Astrocyte of the cerebellum (primary cell): ENCODE measurements at regions of chr10 and their contacts with region 1.

Region 1: GRCh38 chr10:119478111-119478802 is 64.3 kb downstream of the RGS10 start:
- DNase-seq: no peak
- H3K4me3 ChIP-seq: no peak overlapping the region
- CTCF ChIP-seq: no peak

Region 2: GRCh38 chr10:118950190-118950680 is 528.0 kb before region 1 on chr10:
- in situ Hi-C with region 1: no loop called
- DNase-seq: no peak
- H3K4me3 ChIP-seq: no peak overlapping the region
- CTCF ChIP-seq: no peak

Region 3: DNA sequence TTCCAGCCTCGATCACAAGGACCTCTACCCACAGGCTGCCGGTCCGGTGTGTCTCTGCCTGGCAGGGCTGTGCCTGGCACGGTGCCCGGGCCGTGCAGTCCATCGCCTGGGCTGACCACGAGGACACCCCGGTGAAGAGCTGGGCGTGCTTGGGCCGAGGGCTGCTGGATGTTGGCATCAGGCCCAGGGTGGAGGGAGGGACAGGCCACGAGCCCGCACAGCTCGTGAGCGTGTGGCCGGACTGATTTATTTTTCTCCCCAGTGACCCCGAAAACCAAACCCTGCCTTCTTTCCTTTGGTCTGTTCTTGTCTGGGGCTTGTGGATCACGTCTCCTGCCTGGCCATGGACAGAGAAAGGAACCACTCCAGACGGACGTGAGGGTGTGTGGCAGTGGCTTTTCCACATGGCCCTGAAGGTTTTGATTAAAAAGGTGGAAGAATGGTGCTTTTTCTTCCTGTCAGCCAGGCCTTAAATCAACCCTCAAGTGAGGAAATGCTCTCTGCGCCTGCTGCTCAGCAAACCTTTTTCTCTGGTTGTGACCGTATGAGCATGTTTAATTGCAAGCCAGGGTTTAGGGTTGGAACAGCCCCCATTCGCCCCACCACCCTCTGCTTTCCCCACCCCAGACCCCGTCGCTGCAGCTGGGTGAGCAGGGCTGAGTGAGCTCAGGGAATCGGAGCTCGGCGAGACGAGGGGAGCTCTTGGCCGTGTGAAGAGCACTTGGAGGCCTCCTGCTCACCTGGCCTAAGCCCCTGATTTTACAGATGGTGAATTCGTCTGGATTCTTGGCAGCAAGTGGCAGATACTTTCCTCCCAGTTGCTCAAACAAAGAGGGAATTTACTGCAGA is 65.8 kb before region 1 on chr10:
- in situ Hi-C with region 1: loop called (anchors 5 kb)
- DNase-seq: no peak
- H3K4me3 ChIP-seq: no peak overlapping the region
- CTCF ChIP-seq: no peak